Gastrocnemius medialis (tissue), 4 donors: ENCODE measurements at regions of chrX and their contacts with region 1.

Region 1: GRCh38 chrX:107776649-107777535 is 641 bp upstream of the NCBP2L start:
- DNase-seq: peak; percentile 74 to 78
- ATAC-seq: peak; percentile 59 to 76
- H3K4me3 ChIP-seq: peak overlapping the region; percentile 64 to 74 (median 68)
- H3K27ac ChIP-seq: peak overlapping the region; percentile 91 to 96 (median 93)
- H3K4me1 ChIP-seq: peaks cover 9 to 13% of the 10 kb centered on the region in 2 donors
- H3K27me3 ChIP-seq: no peaks in the 10 kb centered on the region
- CTCF ChIP-seq: peak; percentile 66 to 81 (median 78)
- POLR2A ChIP-seq: no peak

Region 2: GRCh38 chrX:107000013-107000515 is 776.8 kb before region 1 on chrX and contains the start of gene MORC4:
- in situ Hi-C with region 1: loop called in 1 of 4 experiments (anchors 25 kb)
- intact Hi-C with region 1: no loop called
- DNase-seq: peak; percentile 50 to 68
- ATAC-seq: peak; percentile 90 to 91
- H3K4me3 ChIP-seq: peak within 1 kb of the TSS; percentile 53 to 61 (median 60)
- H3K27ac ChIP-seq: peak within 1 kb of the TSS; percentile 55 to 69 (median 64)
- H3K4me1 ChIP-seq: no peaks in the 10 kb centered on the region
- H3K27me3 ChIP-seq: no peaks in the 10 kb centered on the region
- CTCF ChIP-seq: no peak
- POLR2A ChIP-seq: peak; percentile 52 to 73
- total RNA-seq, gene MORC4: 5.0 to 10.0 (median 8.4) TPM

Region 3: GRCh38 chrX:107571296-107571998 is 205.4 kb before region 1 on chrX:
- in situ Hi-C with region 1: no loop called
- intact Hi-C with region 1: no loop called
- DNase-seq: peak in 1 of 2 donors; percentile 9
- ATAC-seq: peak in 1 of 2 donors; percentile 80
- H3K4me3 ChIP-seq: no peak overlapping the region
- H3K27ac ChIP-seq: no peak overlapping the region
- H3K4me1 ChIP-seq: no peaks in the 10 kb centered on the region
- H3K27me3 ChIP-seq: no peaks in the 10 kb centered on the region
- CTCF ChIP-seq: no peak
- POLR2A ChIP-seq: no peak

Region 4: GRCh38 chrX:107627838-107628661 is 148.8 kb before region 1 on chrX and contains the start of gene PRPS1:
- in situ Hi-C with region 1: no loop called
- intact Hi-C with region 1: no loop called
- DNase-seq: peak; percentile 81 to 87
- ATAC-seq: peak; percentile 94 to 98
- H3K4me3 ChIP-seq: peak within 1 kb of the TSS; percentile 57 to 76 (median 71)
- H3K27ac ChIP-seq: peak within 1 kb of the TSS; percentile 73 to 90 (median 84)
- H3K4me1 ChIP-seq: peaks cover 0 to 10% of the 10 kb centered on the region in 2 donors
- H3K27me3 ChIP-seq: no peaks in the 10 kb centered on the region
- CTCF ChIP-seq: no peak
- POLR2A ChIP-seq: peak; percentile 72 to 85
- total RNA-seq, gene PRPS1: 19.6 to 46.0 (median 30.9) TPM

Region 5: GRCh38 chrX:107654872-107655761 is 121.8 kb before region 1 on chrX:
- in situ Hi-C with region 1: loop called (anchors 5 to 10 kb)
- intact Hi-C with region 1: loop called (anchors 1 kb)
- DNase-seq: peak in 1 of 2 donors; percentile 58
- ATAC-seq: peak; percentile 74 to 79
- H3K4me3 ChIP-seq: no peak overlapping the region
- H3K27ac ChIP-seq: peak overlapping the region in 2 of 4 donors; percentile 22 to 44
- H3K4me1 ChIP-seq: peaks cover 0 to 7% of the 10 kb centered on the region in 2 donors
- H3K27me3 ChIP-seq: no peaks in the 10 kb centered on the region
- CTCF ChIP-seq: peak; percentile 32 to 81 (median 73)
- POLR2A ChIP-seq: no peak

Region 6: GRCh38 chrX:107716816-107717700 is 59.8 kb before region 1 on chrX:
- in situ Hi-C with region 1: loop called in 2 of 4 experiments (anchors 5 to 10 kb)
- intact Hi-C with region 1: loop called (anchors 1 kb)
- DNase-seq: peak; percentile 86 to 93
- ATAC-seq: peak; percentile 41 to 53
- H3K4me3 ChIP-seq: peak overlapping the region; percentile 75 to 84 (median 78)
- H3K27ac ChIP-seq: peak overlapping the region; percentile 87 to 96 (median 94)
- H3K4me1 ChIP-seq: peaks cover 39 to 42% of the 10 kb centered on the region in 2 donors
- H3K27me3 ChIP-seq: no peaks in the 10 kb centered on the region
- CTCF ChIP-seq: peak in 2 of 5 experiments; percentile 15
- POLR2A ChIP-seq: peak; percentile 98 to 99

Region 7: DNA sequence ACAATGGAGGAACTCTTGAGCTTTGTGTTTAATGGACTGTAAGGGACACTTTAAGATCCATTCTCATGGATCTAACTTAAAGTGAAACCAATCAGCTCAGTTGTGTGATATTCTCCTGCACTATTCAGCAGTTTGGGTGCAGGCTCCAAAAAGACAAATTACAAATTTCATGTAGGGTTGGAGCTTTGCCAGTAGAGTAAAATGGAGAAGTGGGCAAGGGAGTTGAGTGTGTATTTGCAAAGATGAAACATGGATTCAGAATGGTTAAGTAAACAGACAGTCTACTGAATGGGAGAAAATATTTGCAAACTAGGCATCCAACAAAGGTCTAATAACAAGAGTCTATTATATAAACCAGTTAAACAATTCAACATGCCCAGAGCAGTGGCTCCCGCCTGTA is 27.5 kb after region 1 on chrX:
- in situ Hi-C with region 1: no loop called
- intact Hi-C with region 1: no loop called
- DNase-seq: no peak
- ATAC-seq: no peak
- H3K4me3 ChIP-seq: no peak overlapping the region
- H3K27ac ChIP-seq: no peak overlapping the region
- H3K4me1 ChIP-seq: no peaks in the 10 kb centered on the region
- H3K27me3 ChIP-seq: peaks cover 0 to 6% (median 0%) of the 10 kb centered on the region in 3 donors
- CTCF ChIP-seq: no peak
- POLR2A ChIP-seq: no peak

Region 8: GRCh38 chrX:107826238-107827029 is 49.5 kb after region 1 on chrX:
- in situ Hi-C with region 1: no loop called
- intact Hi-C with region 1: loop called (anchors 5 kb)
- DNase-seq: peak; percentile 2 to 31
- ATAC-seq: peak; percentile 66 to 72
- H3K4me3 ChIP-seq: peak overlapping the region; percentile 53 to 76 (median 62)
- H3K27ac ChIP-seq: peak overlapping the region; percentile 79 to 92 (median 90)
- H3K4me1 ChIP-seq: peaks cover 3 to 9% of the 10 kb centered on the region in 2 donors
- H3K27me3 ChIP-seq: no peaks in the 10 kb centered on the region
- CTCF ChIP-seq: no peak
- POLR2A ChIP-seq: peak in 1 of 2 donors; percentile 28

Region 9: GRCh38 chrX:107996124-107996523 is 219.2 kb after region 1 on chrX:
- in situ Hi-C with region 1: no loop called
- intact Hi-C with region 1: no loop called
- DNase-seq: no peak
- ATAC-seq: no peak
- H3K4me3 ChIP-seq: no peak overlapping the region
- H3K27ac ChIP-seq: no peak overlapping the region
- H3K4me1 ChIP-seq: no peaks in the 10 kb centered on the region
- H3K27me3 ChIP-seq: peaks cover 0 to 2% (median 0%) of the 10 kb centered on the region in 3 donors
- CTCF ChIP-seq: no peak
- POLR2A ChIP-seq: no peak